ENCODE measurements at regions of chr6 and their contacts with region 1.

Region 1: DNA sequence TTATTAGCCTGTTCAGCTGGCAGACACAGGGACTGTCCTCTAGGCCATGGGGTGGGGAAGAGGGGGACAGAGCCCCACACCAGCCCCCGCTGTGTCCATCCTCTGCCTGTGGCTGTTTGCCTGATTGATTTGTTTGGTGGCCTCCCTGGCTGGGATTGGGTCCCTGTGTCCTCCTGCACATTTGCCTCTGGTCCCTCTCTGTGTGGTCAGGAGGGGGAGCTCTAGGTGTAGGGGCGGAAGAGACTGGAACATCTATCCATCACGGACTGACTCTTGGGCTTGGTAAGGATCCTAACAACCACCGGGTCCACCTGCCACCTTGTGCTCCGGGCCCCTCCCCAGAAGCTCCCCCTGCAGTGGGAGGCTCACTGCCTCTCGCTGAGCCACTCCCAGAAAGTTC is 38.4 kb upstream of the CCDC167 start:
- DNase-seq: peak in 1 of 2 experiments; percentile 71
- H3K4me3 ChIP-seq: no peak overlapping the region
- H3K27ac ChIP-seq: no peak overlapping the region
- H3K4me1 ChIP-seq: peaks cover 0 to 16% (median 7%) of the 10 kb centered on the region in 4 experiments; a peak in 5 of 7 replicates
- H3K27me3 ChIP-seq: peaks cover 23 to 52% (median 42%) of the 10 kb centered on the region in 4 experiments
- CTCF ChIP-seq: peak; percentile 72 to 85 (median 80)
- EP300 ChIP-seq: no peak
- POLR2A ChIP-seq: no peak
- RAD21 ChIP-seq: peak; percentile 71 to 80

Region 2: DNA sequence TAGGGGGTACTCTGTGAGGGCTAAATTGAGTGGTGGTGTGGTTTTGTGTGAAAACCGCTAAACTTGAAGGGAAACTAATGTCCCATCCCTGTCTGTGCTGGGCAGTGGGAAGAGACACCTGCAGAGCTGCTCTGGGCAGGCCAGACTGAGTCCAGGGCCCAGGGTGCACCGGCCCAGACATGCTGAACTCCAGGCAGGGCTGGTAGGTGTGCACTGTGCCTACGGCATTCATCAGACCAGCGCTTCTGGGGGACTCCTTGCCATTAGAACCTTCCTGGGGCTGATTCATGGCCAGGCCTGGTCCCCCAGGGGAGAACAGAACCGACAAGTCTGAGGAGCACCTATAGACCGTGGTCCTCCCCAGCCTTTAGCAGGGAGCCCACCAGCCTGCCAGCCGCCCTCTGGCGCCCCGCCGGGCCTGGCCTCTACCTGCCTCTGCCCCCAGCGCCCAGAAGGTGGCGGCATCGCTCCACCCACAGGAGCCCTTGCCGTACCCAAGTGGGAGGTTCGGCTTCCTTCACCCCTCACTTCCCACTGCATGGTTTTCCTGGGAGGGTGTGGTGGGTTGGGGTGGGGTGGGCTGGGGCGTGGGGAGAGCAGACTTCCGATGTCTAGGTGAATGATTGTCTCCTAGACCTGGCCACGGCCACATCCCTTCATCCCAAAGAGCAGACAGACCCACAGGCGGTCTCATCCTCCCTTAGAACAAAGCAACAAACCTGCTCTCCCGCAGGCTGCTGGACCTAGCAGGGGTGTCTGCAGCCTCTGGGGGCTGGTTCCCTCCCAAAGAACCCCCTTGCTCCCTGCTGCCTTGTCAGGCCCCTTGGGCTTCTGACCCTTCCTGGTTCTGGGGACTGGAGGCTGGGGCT is 54.0 kb before region 1 on chr6:
- CTCF ChIA-PET with region 1: interaction called, 14 read pairs
- POLR2A ChIA-PET with region 1: no interaction called
- DNase-seq: peak; percentile 23 to 93
- H3K4me3 ChIP-seq: no peak overlapping the region
- H3K27ac ChIP-seq: no peak overlapping the region
- H3K4me1 ChIP-seq: peaks cover 0 to 15% (median 4%) of the 10 kb centered on the region in 4 experiments; a peak in 5 of 7 replicates
- H3K27me3 ChIP-seq: no peaks in the 10 kb centered on the region
- CTCF ChIP-seq: peak in 2 of 3 experiments; percentile 91 to 97; a peak in 3 of 4 replicates
- EP300 ChIP-seq: no peak
- POLR2A ChIP-seq: no peak
- RAD21 ChIP-seq: peak; percentile 97 to 98

Region 3: GRCh38 chr6:37499433-37500293 is 38.4 kb before region 1 on chr6 and contains the start of gene CCDC167:
- CTCF ChIA-PET with region 1: interaction called, 52 read pairs
- POLR2A ChIA-PET with region 1: no interaction called
- DNase-seq: peak; percentile 98 to 99
- H3K4me3 ChIP-seq: peak within 1 kb of the TSS; percentile 56 to 69 (median 63)
- H3K27ac ChIP-seq: peak within 1 kb of the TSS; percentile 92
- H3K4me1 ChIP-seq: peaks cover 0 to 5% (median 3%) of the 10 kb centered on the region in 4 experiments; a peak in 4 of 7 replicates
- H3K27me3 ChIP-seq: peaks cover 0 to 8% (median 5%) of the 10 kb centered on the region in 4 experiments; a peak in 4 of 7 replicates
- CTCF ChIP-seq: no peak
- EP300 ChIP-seq: peak in 1 of 2 experiments; percentile 41; a peak in 1 of 3 replicates
- POLR2A ChIP-seq: peak; percentile 53 to 60; a peak in 2 of 3 replicates
- RAD21 ChIP-seq: no peak
- total RNA-seq, gene CCDC167: 11.0 TPM in 2 replicates

Region 4: DNA sequence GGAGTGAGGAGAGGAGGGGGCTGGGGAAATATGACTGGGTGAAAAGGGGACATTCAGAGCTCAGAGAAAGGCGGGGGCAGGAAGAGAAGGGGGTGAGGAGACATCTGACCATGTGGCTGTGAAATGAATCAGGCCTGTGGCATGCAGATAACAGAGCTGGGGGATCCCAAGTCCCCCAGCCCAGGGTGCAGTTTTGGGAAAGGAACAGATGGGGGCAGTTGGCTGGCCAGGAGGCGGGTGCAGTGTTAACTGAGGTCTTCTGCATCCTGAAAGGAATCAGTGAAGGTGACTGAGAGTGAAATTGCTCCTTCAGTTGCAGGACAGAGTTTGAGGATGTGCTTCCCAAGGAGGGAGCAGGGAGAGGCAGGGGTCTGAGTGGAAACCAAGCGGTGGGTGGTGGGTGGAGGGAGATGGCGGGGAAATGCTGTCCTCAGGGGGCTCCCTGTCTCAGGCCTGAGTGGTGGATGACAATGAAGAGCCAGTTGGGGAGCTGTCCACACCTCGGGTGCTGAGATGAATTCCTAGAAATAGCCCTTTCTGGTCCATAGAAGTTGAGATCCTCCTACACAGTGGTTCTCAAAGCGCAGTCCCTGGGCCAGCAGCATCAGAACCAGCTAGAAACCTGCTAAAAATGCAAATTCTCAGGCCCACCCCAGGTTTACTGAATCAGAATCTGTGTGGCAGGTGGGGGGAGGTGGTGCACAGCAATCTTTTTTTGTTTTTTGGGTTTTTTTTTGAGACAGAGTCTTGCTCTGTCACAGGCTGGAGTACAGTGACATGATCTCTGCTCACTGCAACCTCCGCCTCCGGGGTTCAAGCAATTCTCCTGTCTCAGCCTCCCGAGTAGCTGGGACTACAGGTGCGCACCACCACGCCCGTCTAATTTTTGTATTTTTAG is 12.4 kb before region 1 on chr6:
- CTCF ChIA-PET with region 1: interaction called, 80 read pairs
- POLR2A ChIA-PET with region 1: interaction called, 3 read pairs
- DNase-seq: peak in 1 of 2 experiments; percentile 82
- H3K4me3 ChIP-seq: no peak overlapping the region
- H3K27ac ChIP-seq: no peak overlapping the region
- H3K4me1 ChIP-seq: no peaks in the 10 kb centered on the region; a peak in 2 of 7 replicates
- H3K27me3 ChIP-seq: 0 out of 7 replicates have a peak, but pooled peaks cover 0 to 2% (median 0%) of the 10 kb centered on the region in 4 experiments
- CTCF ChIP-seq: peak in 2 of 3 experiments; percentile 0 to 14; a peak in 1 of 4 replicates
- EP300 ChIP-seq: no peak
- POLR2A ChIP-seq: no peak
- RAD21 ChIP-seq: 0 out of 4 replicates have a peak, but pooled peaks of 1 of the 2 experiments have one; percentile 1

Region 5: DNA sequence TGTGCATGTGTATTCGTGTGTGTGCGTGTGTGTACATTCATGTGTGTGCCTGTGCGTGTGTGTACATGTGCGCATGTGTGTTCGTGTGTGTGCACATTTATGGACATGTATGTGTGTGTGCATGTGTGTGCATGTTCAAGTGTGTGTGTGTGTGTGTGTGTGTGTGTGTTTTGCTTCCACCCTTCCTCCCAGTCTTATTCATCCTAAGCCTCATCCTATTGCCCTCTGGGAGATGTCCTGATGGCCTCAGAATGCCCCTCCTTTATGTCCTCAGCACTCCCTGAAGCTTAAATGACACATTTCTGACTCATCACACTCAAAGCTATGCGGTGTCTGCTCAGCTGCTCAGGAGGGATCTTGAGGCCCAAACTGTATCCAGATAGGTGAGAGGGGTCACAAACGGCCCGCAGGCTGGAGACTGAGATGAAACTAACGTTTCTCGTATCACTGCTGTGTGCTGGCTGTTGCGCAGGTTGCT is 38.3 kb after region 1 on chr6:
- CTCF ChIA-PET with region 1: interaction called, 47 read pairs
- POLR2A ChIA-PET with region 1: no interaction called
- DNase-seq: no peak
- H3K4me3 ChIP-seq: no peak overlapping the region
- H3K27ac ChIP-seq: no peak overlapping the region
- H3K4me1 ChIP-seq: no peaks in the 10 kb centered on the region
- H3K27me3 ChIP-seq: no peaks in the 10 kb centered on the region; a peak in 1 of 7 replicates
- CTCF ChIP-seq: no peak
- EP300 ChIP-seq: no peak
- POLR2A ChIP-seq: no peak
- RAD21 ChIP-seq: no peak

Region 6: GRCh38 chr6:37653933-37654565 is 115.9 kb after region 1 on chr6:
- CTCF ChIA-PET with region 1: interaction called, 26 read pairs
- POLR2A ChIA-PET with region 1: no interaction called
- DNase-seq: peak; percentile 15 to 81
- H3K4me3 ChIP-seq: no peak overlapping the region
- H3K27ac ChIP-seq: no peak overlapping the region
- H3K4me1 ChIP-seq: peaks cover 0 to 6% (median 1%) of the 10 kb centered on the region in 4 experiments; a peak in 3 of 7 replicates
- H3K27me3 ChIP-seq: peaks cover 3 to 21% (median 16%) of the 10 kb centered on the region in 4 experiments
- CTCF ChIP-seq: peak in 2 of 3 experiments; percentile 62 to 86; a peak in 3 of 4 replicates
- EP300 ChIP-seq: no peak
- POLR2A ChIP-seq: no peak
- RAD21 ChIP-seq: peak; percentile 25 to 36; a peak in 2 of 4 replicates